Pancreas (tissue), 10 donors: ENCODE measurements at regions of chr14 and their contacts with region 1.

Region 1: DNA sequence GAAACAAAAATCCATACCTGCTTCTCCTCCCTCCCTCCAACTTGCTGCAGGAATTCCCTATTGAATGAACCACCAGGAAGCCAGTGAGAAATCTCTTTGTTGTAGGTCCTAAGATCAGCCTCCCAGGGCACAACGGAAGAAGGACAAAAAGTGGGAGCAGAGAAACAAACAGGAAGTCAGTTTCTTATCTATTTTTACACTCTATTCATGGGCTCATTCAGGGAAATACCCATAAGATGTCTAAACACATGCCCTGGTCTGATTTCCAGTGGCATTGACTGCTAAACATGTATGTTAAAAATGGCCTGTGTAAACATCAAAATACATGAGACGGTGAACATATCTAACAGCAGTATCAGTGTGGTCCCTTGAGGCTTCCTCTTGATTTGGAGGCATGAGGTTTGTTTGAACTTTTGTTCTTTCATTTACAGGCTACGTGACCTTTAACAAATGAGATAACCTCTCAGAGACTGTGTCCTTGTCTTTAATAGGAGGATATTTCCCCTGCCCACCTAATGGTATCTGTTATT is 18.8 kb downstream of the GPR65 start:
- DNase-seq: no peak
- ATAC-seq: no peak
- H3K4me3 ChIP-seq: no peak overlapping the region
- H3K27ac ChIP-seq: no peak overlapping the region
- H3K4me1 ChIP-seq: no peaks in the 10 kb centered on the region
- H3K27me3 ChIP-seq: no peaks in the 10 kb centered on the region
- CTCF ChIP-seq: no peak

Region 2: GRCh38 chr14:88154321-88154720 is 130.6 kb after region 1 on chr14:
- intact Hi-C with region 1: loop called in 1 of 3 experiments (anchors 10 kb)
- DNase-seq: no peak
- ATAC-seq: no peak
- H3K4me3 ChIP-seq: no peak overlapping the region
- H3K27ac ChIP-seq: no peak overlapping the region
- H3K4me1 ChIP-seq: no peaks in the 10 kb centered on the region
- H3K27me3 ChIP-seq: no peaks in the 10 kb centered on the region
- CTCF ChIP-seq: no peak

Region 3: GRCh38 chr14:88804477-88804876 is 780.8 kb after region 1 on chr14:
- intact Hi-C with region 1: no loop called
- DNase-seq: no peak
- ATAC-seq: no peak
- H3K4me3 ChIP-seq: no peak overlapping the region
- H3K27ac ChIP-seq: no peak overlapping the region
- H3K4me1 ChIP-seq: no peaks in the 10 kb centered on the region
- H3K27me3 ChIP-seq: no peaks in the 10 kb centered on the region
- CTCF ChIP-seq: no peak